Activated CD4-positive, alpha-beta memory T cell treated with anti-CD3 and anti-CD28 coated beads, Interleukin-2, amount 10 ng/mL, durations not matched to agents 7 days and 5 days (primary cell): ENCODE measurements at regions of chr11 and their contacts with region 1.

Region 1: GRCh38 chr11:93784152-93784934 is at the start of gene MED17:
- DNase-seq: peak; percentile 91
- H3K4me3 Mint-ChIP-seq: peak within 1 kb of the TSS; percentile 97
- H3K27ac Mint-ChIP-seq: peak within 1 kb of the TSS; percentile 90
- H3K4me1 Mint-ChIP-seq: peaks cover 50% of the 10 kb centered on the region
- H3K27me3 Mint-ChIP-seq: no peaks in the 10 kb centered on the region
- total RNA-seq, gene MED17: 40.6 to 42.9 TPM

Region 2: DNA sequence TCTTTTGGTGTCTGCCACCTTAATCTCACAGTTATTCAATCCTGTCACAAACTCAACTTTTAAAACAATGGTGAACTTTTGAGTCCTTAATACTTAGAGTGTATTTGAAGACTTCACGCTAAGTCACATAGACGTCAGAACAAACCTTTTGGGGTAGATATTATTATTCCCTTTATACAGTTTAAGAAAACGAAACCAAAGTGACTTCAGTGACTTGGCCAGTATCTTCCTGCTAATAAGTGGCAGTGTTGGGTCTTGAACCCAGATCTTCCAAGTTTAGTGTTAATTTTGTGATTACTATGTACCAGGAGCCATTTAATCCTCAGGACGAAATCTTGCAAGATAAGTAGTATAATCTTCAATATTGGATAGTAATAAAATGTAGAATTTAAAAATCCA is 122.2 kb before region 1 on chr11:
- CTCF ChIA-PET with region 1: interaction called, 5 read pairs
- POLR2A ChIA-PET with region 1: interaction called, 10 read pairs
- DNase-seq: no peak
- H3K4me3 Mint-ChIP-seq: peak overlapping the region; percentile 87
- H3K27ac Mint-ChIP-seq: peak overlapping the region; percentile 84
- H3K4me1 Mint-ChIP-seq: peaks cover 54% of the 10 kb centered on the region
- H3K27me3 Mint-ChIP-seq: no peaks in the 10 kb centered on the region